ENCODE measurements at regions of chr20 and their contacts with region 1.

Region 1: GRCh38 chr20:44115762-44116644 is 71.0 kb downstream of the JPH2 start:
- DNase-seq: no peak
- ATAC-seq: no peak
- H3K4me3 ChIP-seq: no peak overlapping the region
- H3K27ac ChIP-seq: no peak overlapping the region
- H3K4me1 ChIP-seq: no peaks in the 10 kb centered on the region
- H3K27me3 ChIP-seq: peaks cover 40% of the 10 kb centered on the region
- CTCF ChIP-seq: no peak

Region 2: GRCh38 chr20:44193801-44194200 is 77.8 kb after region 1 on chr20:
- intact Hi-C with region 1: loop called (anchors 5 kb)
- DNase-seq: no peak
- ATAC-seq: no peak
- H3K4me3 ChIP-seq: no peak overlapping the region
- H3K27ac ChIP-seq: no peak overlapping the region
- H3K4me1 ChIP-seq: peaks cover under 1% of the 10 kb centered on the region
- H3K27me3 ChIP-seq: no peaks in the 10 kb centered on the region
- CTCF ChIP-seq: no peak

Measured in lower lobe of right lung (tissue), 2 donors.